Gastrocnemius medialis (tissue), 4 donors: ENCODE measurements at regions of chr22 and their contacts with region 1.

Region 1: GRCh38 chr22:41648432-41648831 is 27.3 kb downstream of the XRCC6 start:
- DNase-seq: no peak
- ATAC-seq: no peak
- H3K4me3 ChIP-seq: no peak overlapping the region
- H3K27ac ChIP-seq: no peak overlapping the region
- H3K4me1 ChIP-seq: no peaks in the 10 kb centered on the region
- H3K27me3 ChIP-seq: no peaks in the 10 kb centered on the region
- CTCF ChIP-seq: no peak
- POLR2A ChIP-seq: no peak

Region 2: GRCh38 chr22:41106122-41106968 is 542.1 kb before region 1 on chr22:
- in situ Hi-C with region 1: no loop called
- intact Hi-C with region 1: loop called (anchors 5 kb)
- DNase-seq: no peak
- ATAC-seq: no peak
- H3K4me3 ChIP-seq: no peak overlapping the region
- H3K27ac ChIP-seq: peak overlapping the region; percentile 70 to 80 (median 75)
- H3K4me1 ChIP-seq: peaks cover 49 to 64% of the 10 kb centered on the region in 2 donors
- H3K27me3 ChIP-seq: no peaks in the 10 kb centered on the region
- CTCF ChIP-seq: no peak
- POLR2A ChIP-seq: no peak

Region 3: DNA sequence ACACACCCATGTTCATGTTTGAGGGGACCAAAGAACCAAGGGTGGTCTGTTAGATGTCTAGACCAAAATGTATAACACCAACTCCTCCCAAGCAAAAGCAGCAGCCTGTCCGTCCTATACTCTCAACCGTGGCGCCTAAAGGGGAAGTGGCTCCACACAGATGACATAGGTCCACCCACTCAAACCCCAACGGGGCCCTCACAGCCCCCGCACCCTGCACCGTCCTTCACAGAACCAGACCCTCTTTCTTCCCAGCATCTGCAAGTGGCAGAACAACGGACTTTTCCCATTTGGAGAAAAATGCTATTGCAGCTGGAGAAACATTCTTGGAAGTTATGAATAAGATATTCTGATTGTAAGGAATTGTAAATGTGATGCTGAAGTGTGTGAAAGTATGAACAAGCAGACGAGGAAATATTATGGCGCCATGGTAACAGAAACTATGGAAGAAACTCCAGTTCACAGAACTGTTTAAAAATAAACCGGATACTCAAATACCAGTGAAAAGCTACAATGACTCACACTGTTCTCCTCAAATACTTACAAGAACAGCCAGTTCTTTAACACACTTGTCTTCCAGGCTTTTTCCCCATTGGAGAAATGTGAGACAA is 1285.2 kb after region 1 on chr22:
- in situ Hi-C with region 1: no loop called
- intact Hi-C with region 1: no loop called
- DNase-seq: no peak
- ATAC-seq: peak; percentile 61 to 64
- H3K4me3 ChIP-seq: peak overlapping the region in 3 of 4 donors; percentile 11 to 37 (median 33)
- H3K27ac ChIP-seq: peak overlapping the region; percentile 80 to 95 (median 83)
- H3K4me1 ChIP-seq: peaks cover 81 to 90% of the 10 kb centered on the region in 2 donors
- H3K27me3 ChIP-seq: no peaks in the 10 kb centered on the region
- CTCF ChIP-seq: no peak
- POLR2A ChIP-seq: no peak